SK-N-SH (cell line): ENCODE measurements at regions of chr6 and their contacts with region 1.

Region 1: GRCh38 chr6:89970609-89971337 is 76.5 kb downstream of the GJA10 start:
- DNase-seq: peak; percentile 67
- H3K4me3 ChIP-seq: no peak overlapping the region
- H3K27ac ChIP-seq: peak overlapping the region in 1 of 2 experiments; percentile 58; a peak in 2 of 4 replicates
- H3K4me1 ChIP-seq: peaks cover 0 to 24% of the 10 kb centered on the region in 2 experiments; a peak in 2 of 4 replicates
- H3K27me3 ChIP-seq: 0 out of 2 replicates have a peak, but pooled peaks cover under 1% of the 10 kb centered on the region
- CTCF ChIP-seq: peak; percentile 79
- EP300 ChIP-seq: no peak
- RAD21 ChIP-seq: peak; percentile 95

Region 2: DNA sequence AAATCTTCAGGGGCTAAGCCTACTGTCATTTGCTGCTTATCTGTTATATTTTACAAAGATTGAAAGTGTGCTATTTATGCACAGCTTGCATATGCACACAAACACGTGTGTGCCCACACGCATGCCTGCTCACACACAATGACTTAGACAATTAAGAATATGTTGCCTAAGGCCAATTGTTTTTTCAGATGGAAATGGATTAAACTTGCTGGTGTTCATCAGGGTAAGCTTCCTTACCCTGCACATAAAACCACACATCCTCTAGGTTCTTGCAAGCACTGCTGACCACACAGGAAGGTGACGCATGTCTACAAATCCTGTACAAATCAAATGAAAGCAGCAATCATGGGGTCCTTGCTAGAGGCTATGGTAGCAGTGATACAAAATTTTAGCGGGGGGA is 18.1 kb before region 1 on chr6:
- CTCF ChIA-PET with region 1: interaction called, 22 read pairs
- POLR2A ChIA-PET with region 1: interaction called, 4 read pairs
- DNase-seq: no peak
- H3K4me3 ChIP-seq: no peak overlapping the region
- H3K27ac ChIP-seq: peak overlapping the region in 1 of 2 experiments; percentile 62; a peak in 2 of 4 replicates
- H3K4me1 ChIP-seq: peaks cover 0 to 28% of the 10 kb centered on the region in 2 experiments; a peak in 2 of 4 replicates
- H3K27me3 ChIP-seq: no peaks in the 10 kb centered on the region
- CTCF ChIP-seq: no peak
- EP300 ChIP-seq: no peak
- RAD21 ChIP-seq: no peak

Region 3: GRCh38 chr6:90278129-90278528 is 307.4 kb after region 1 on chr6:
- CTCF ChIA-PET with region 1: no interaction called
- POLR2A ChIA-PET with region 1: no interaction called
- DNase-seq: no peak
- H3K4me3 ChIP-seq: no peak overlapping the region
- H3K27ac ChIP-seq: no peak overlapping the region
- H3K4me1 ChIP-seq: no peaks in the 10 kb centered on the region; a peak in 1 of 4 replicates
- H3K27me3 ChIP-seq: no peaks in the 10 kb centered on the region
- CTCF ChIP-seq: no peak
- EP300 ChIP-seq: no peak
- RAD21 ChIP-seq: no peak

Region 4: DNA sequence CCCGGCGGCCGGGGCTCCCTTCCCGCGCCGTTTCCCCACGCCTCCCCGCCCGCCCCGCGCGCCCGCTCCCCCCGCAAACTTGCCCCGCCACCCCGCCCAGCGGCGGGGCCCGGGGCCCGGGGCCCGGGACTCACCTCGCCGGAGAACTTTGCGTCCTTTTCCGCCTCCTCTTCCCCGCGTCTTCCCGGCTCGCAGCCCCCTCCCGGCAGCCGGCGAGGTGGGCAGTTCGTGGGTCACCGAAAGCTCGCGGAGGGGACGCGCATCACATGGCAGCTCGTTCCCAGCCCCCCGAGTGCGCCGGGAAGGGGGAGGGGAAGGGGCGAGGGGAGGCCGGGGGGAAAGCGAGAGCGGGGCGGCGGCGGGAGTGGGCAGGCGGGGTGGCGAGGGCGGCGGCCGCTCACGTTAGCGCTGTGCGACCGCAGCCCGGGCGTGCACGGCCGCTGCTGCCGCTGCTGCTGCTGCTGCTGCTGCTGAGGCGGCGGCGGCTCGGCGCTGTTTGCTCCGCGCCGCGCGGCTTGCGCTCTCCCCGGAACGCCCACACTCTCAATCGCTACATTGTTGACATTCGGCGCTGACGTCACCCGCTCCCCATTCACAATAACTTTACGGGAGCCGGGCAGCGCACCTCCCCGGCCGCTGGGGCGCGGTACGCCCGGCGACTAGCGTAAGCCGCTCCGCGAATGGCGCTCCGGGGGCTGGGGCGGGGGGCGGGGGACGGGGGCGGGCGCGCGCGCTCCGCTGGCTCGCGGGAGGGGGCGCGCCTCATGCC is 325.8 kb after region 1 on chr6 and contains the start of gene BACH2:
- CTCF ChIA-PET with region 1: interaction called, 11 read pairs
- POLR2A ChIA-PET with region 1: interaction called, 3 read pairs
- DNase-seq: peak; percentile 88
- H3K4me3 ChIP-seq: peak within 1 kb of the TSS; percentile 59 to 63
- H3K27ac ChIP-seq: peak within 1 kb of the TSS in 1 of 2 experiments; percentile 69; a peak in 1 of 4 replicates
- H3K4me1 ChIP-seq: peaks cover 0 to 30% of the 10 kb centered on the region in 2 experiments; a peak in 2 of 4 replicates
- H3K27me3 ChIP-seq: peaks cover 29% of the 10 kb centered on the region
- CTCF ChIP-seq: no peak
- EP300 ChIP-seq: no peak
- RAD21 ChIP-seq: no peak
- polyA plus RNA-seq, gene BACH2: 0.46 and 0.50 TPM in 2 replicates

Region 5: DNA sequence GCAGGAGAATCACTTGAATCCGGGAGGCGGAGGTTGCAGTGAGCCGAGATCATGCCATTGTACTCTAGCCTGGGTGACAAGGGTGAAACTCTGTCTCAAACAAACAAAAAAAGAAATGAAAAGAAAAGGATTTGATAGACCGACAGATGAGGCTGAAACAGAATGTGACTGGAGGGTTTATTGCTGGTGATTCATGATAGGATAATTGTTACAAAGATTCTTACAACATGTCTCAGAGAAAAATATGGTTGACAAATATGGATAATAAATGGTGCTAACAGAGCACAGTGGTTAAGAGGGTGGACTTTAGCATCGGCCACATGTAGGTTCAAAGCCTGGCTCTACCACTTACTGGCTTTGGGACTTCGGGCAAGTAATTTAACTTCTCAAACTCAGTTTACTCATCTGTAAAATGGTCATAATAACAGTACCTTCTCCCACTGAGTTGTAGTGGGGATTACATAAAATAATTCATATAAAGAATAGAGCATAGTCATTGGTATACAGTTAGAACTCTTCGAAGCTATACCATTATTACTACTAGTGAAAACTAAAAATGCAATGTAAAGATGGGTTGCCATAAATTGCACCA is 484.2 kb after region 1 on chr6:
- CTCF ChIA-PET with region 1: interaction called, 10 read pairs
- POLR2A ChIA-PET with region 1: no interaction called
- DNase-seq: no peak
- H3K4me3 ChIP-seq: no peak overlapping the region
- H3K27ac ChIP-seq: no peak overlapping the region
- H3K4me1 ChIP-seq: no peaks in the 10 kb centered on the region
- H3K27me3 ChIP-seq: no peaks in the 10 kb centered on the region
- CTCF ChIP-seq: no peak
- EP300 ChIP-seq: no peak
- RAD21 ChIP-seq: no peak